ENCODE measurements at regions of chr17 and their contacts with region 1.

Region 1: GRCh38 chr17:29640413-29640812 is 17.7 kb upstream of the CORO6 start:
- DNase-seq: no peak
- ATAC-seq: no peak
- H3K4me3 ChIP-seq: no peak overlapping the region
- H3K27ac ChIP-seq: no peak overlapping the region
- H3K4me1 ChIP-seq: peaks cover 12 to 22% of the 10 kb centered on the region in 2 experiments
- H3K27me3 ChIP-seq: no peaks in the 10 kb centered on the region
- CTCF ChIP-seq: no peak
- EP300 ChIP-seq: no peak
- POLR2A ChIP-seq: no peak
- RAD21 ChIP-seq: no peak

Region 2: GRCh38 chr17:29579866-29580771 is 60.3 kb before region 1 on chr17:
- CTCF ChIA-PET with region 1: no interaction called
- POLR2A ChIA-PET with region 1: no interaction called
- in situ Hi-C with region 1: no loop called
- intact Hi-C with region 1: no loop called
- DNase-seq: peak; percentile 72 to 80 (median 76)
- ATAC-seq: peak; percentile 92
- H3K4me3 ChIP-seq: no peak overlapping the region
- H3K27ac ChIP-seq: no peak overlapping the region
- H3K4me1 ChIP-seq: peaks cover 4 to 50% of the 10 kb centered on the region in 2 experiments; a peak in 3 of 5 replicates
- H3K27me3 ChIP-seq: no peaks in the 10 kb centered on the region
- CTCF ChIP-seq: peak; percentile 86 to 89 (median 87)
- EP300 ChIP-seq: no peak
- POLR2A ChIP-seq: no peak
- RAD21 ChIP-seq: peak; percentile 73 to 84

Region 3: GRCh38 chr17:29611311-29612053 is 28.9 kb before region 1 on chr17:
- CTCF ChIA-PET with region 1: no interaction called
- POLR2A ChIA-PET with region 1: no interaction called
- in situ Hi-C with region 1: no loop called
- intact Hi-C with region 1: no loop called
- DNase-seq: no peak
- ATAC-seq: no peak
- H3K4me3 ChIP-seq: no peak overlapping the region
- H3K27ac ChIP-seq: no peak overlapping the region
- H3K4me1 ChIP-seq: peaks cover 12 to 45% of the 10 kb centered on the region in 2 experiments; a peak in 4 of 5 replicates
- H3K27me3 ChIP-seq: no peaks in the 10 kb centered on the region
- CTCF ChIP-seq: no peak
- EP300 ChIP-seq: no peak
- POLR2A ChIP-seq: no peak
- RAD21 ChIP-seq: no peak

Region 4: GRCh38 chr17:29625037-29625750 is 15.2 kb before region 1 on chr17:
- CTCF ChIA-PET with region 1: no interaction called
- POLR2A ChIA-PET with region 1: interaction called, 11 read pairs
- in situ Hi-C with region 1: no loop called
- intact Hi-C with region 1: no loop called
- DNase-seq: no peak
- ATAC-seq: no peak
- H3K4me3 ChIP-seq: no peak overlapping the region
- H3K27ac ChIP-seq: no peak overlapping the region
- H3K4me1 ChIP-seq: peaks cover 12 to 24% of the 10 kb centered on the region in 2 experiments; a peak in 4 of 5 replicates
- H3K27me3 ChIP-seq: no peaks in the 10 kb centered on the region
- CTCF ChIP-seq: no peak
- EP300 ChIP-seq: no peak
- POLR2A ChIP-seq: no peak
- RAD21 ChIP-seq: no peak

Region 5: DNA sequence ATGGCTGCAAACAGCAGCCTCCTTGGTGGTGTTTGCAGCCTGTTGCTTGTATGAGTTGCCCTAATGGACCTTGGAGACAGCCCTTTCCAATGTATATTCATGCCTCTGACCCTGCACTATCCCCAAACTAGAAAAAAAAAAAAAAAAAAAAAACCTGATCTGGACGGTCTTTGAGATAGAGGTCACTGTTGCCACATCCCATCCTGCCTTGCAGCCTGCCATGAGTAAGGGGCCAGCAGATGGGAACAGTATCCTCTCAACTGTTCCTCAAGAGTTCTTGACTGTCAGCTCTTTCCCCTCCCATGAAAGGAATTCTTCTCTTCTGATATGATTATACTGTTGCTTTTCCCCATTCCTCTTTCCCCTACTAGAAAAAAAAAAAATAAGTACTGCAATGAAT is 137.2 kb after region 1 on chr17:
- CTCF ChIA-PET with region 1: interaction called, 40 read pairs
- POLR2A ChIA-PET with region 1: interaction called, 8 read pairs
- in situ Hi-C with region 1: loop called (anchors 5 kb)
- intact Hi-C with region 1: loop called (anchors 1 kb)
- DNase-seq: no peak
- ATAC-seq: no peak
- H3K4me3 ChIP-seq: no peak overlapping the region
- H3K27ac ChIP-seq: no peak overlapping the region
- H3K4me1 ChIP-seq: no peaks in the 10 kb centered on the region; a peak in 3 of 5 replicates
- H3K27me3 ChIP-seq: no peaks in the 10 kb centered on the region
- CTCF ChIP-seq: no peak
- EP300 ChIP-seq: no peak
- POLR2A ChIP-seq: no peak
- RAD21 ChIP-seq: no peak

Region 6: GRCh38 chr17:29793519-29793918 is 153.1 kb after region 1 on chr17:
- CTCF ChIA-PET with region 1: no interaction called
- POLR2A ChIA-PET with region 1: no interaction called
- in situ Hi-C with region 1: no loop called
- intact Hi-C with region 1: no loop called
- DNase-seq: no peak
- ATAC-seq: no peak
- H3K4me3 ChIP-seq: no peak overlapping the region
- H3K27ac ChIP-seq: no peak overlapping the region
- H3K4me1 ChIP-seq: peaks cover 0 to 3% of the 10 kb centered on the region in 2 experiments; a peak in 2 of 5 replicates
- H3K27me3 ChIP-seq: no peaks in the 10 kb centered on the region
- CTCF ChIP-seq: no peak
- EP300 ChIP-seq: no peak
- POLR2A ChIP-seq: no peak
- RAD21 ChIP-seq: no peak

Measured in K562 (cell line).